Dorsolateral prefrontal cortex (tissue), 120 donors: ENCODE measurements at regions of chr19 and their contacts with region 1.

Region 1: GRCh38 chr19:12681074-12681951 is at the start of gene DHPS:
- DNase-seq: peak; percentile 85 to 96 (median 91)
- H3K4me3 ChIP-seq: peak within 1 kb of the TSS; percentile 73 to 100 (median 95)
- H3K27ac ChIP-seq: peak within 1 kb of the TSS in 58 of 59 donors; percentile 56 to 99 (median 91)
- H3K27me3 ChIP-seq: no peaks in the 10 kb centered on the region
- CTCF ChIP-seq: peak in 32 of 56 donors; percentile 8 to 56 (median 24)
- total RNA-seq, gene DHPS: 79.8 to 142 (median 103) TPM

Region 2: DNA sequence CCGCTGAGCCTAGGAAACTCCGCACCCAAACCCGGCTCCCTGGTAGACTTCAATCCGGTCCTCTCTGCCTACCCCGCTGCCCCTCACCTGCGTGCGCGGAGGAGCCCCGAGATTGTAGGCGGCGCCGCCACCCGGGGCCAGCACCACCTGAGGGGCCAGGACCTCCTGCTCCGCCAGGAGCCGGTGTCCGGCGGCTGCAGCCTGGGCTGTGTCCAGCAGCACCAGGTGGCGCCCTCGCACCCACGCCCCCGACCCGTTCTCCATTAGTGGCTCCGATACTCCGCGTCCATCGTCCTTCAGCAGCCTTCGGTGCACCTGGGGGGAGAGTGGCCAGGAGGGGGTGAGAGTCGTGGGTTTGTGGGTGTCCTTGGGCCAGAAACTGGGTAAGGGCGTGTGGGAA is 33.2 kb before region 1 on chr19:
- intact Hi-C with region 1: no loop called
- DNase-seq: no peak
- H3K4me3 ChIP-seq: peak overlapping the region in 48 of 59 donors; percentile 7 to 57 (median 39)
- H3K27ac ChIP-seq: peak overlapping the region in 1 of 59 donors; percentile 23
- H3K27me3 ChIP-seq: no peaks in the 10 kb centered on the region
- CTCF ChIP-seq: peak in 21 of 56 donors; percentile 15 to 35 (median 22)

Region 3: GRCh38 chr19:12666265-12667048 is 14.9 kb before region 1 on chr19 and contains the starts of genes MAN2B1 and WDR83:
- intact Hi-C with region 1: loop called in 1 of 2 experiments (anchors 1 kb)
- DNase-seq: peak in 9 of 10 donors; percentile 48 to 83 (median 65)
- H3K4me3 ChIP-seq: peak within 1 kb of the TSS; percentile 66 to 100 (median 92)
- H3K27ac ChIP-seq: peak within 1 kb of the TSS in 54 of 59 donors; percentile 21 to 89 (median 74)
- H3K27me3 ChIP-seq: no peaks in the 10 kb centered on the region
- CTCF ChIP-seq: peak in 2 of 56 donors; percentile 12 to 13
- total RNA-seq, gene MAN2B1: 16.5 to 62.2 (median 32.8) TPM
- total RNA-seq, gene WDR83: 11.8 to 30.1 (median 19.5) TPM

Region 4: DNA sequence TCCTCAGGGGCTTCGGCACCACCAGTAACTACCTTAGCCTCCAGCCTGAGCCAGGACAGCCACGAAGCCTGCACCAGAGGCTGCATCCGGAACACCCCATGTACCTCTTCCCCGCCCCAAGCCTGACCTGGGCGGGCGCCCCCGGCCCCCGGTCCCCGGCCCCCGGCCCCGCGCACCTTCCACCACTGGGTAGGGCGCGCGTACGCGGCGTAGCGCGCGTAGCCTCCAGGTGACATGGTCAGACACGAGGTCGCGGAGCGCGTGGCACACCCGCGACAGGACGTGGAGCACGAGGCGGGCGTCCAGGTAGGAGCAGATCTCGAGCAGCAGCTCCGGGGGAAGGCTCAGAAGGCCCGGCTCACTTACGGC is 14.7 kb after region 1 on chr19:
- intact Hi-C with region 1: loop called in 1 of 2 experiments (anchors 2 kb)
- DNase-seq: peak in 1 of 10 donors; percentile 43
- H3K4me3 ChIP-seq: peak overlapping the region; percentile 69 to 99 (median 87)
- H3K27ac ChIP-seq: peak overlapping the region in 13 of 59 donors; percentile 82 to 95 (median 89)
- H3K27me3 ChIP-seq: no peaks in the 10 kb centered on the region
- CTCF ChIP-seq: no peak

Region 5: GRCh38 chr19:12918271-12918670 is 237.0 kb after region 1 on chr19:
- intact Hi-C with region 1: no loop called
- DNase-seq: no peak
- H3K4me3 ChIP-seq: no peak overlapping the region
- H3K27ac ChIP-seq: no peak overlapping the region
- H3K27me3 ChIP-seq: no peaks in the 10 kb centered on the region
- CTCF ChIP-seq: no peak

Region 6: DNA sequence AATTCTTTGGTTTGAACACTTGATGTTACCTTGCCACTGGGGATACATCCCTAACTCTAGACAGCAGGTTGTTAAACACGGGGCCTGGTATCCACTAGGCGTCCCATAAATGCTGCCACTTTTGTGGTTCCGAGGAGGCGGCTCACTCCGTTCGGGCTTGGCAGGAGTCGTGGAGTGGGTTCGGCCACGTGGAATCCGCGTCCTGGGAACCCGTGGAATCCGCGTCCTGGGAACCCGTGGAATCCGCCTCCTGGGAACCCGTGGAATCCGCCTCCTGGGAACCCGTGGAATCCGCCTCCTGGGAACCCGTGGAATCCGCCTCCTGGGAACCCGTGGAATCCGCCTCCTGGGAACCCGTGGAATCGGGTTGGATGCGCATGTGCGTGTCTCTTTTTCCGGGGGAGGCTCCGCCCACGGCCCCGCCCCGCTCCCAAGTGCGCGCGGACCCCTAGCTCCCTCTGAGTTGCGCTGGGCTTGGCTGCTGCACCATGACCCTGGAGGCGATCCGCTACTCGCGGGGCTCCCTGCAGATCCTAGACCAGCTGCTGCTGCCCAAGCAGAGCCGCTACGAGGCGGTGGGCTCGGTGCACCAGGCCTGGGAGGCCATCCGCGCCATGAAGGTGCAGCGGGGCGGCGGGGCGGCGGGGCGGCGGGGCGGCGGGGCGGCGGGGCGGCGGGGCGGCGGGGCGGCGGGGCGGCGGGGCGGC is 1082.9 kb after region 1 on chr19 and contains the start of gene MRI1:
- intact Hi-C with region 1: no loop called
- DNase-seq: peak; percentile 73 to 93 (median 84)
- H3K4me3 ChIP-seq: peak within 1 kb of the TSS; percentile 53 to 87 (median 78)
- H3K27ac ChIP-seq: peak within 1 kb of the TSS in 56 of 59 donors; percentile 1 to 86 (median 68)
- H3K27me3 ChIP-seq: no peaks in the 10 kb centered on the region
- CTCF ChIP-seq: peak in 5 of 56 donors; percentile 6 to 34 (median 17)
- total RNA-seq, gene MRI1: 17.0 to 55.8 (median 33.9) TPM